Natural killer cell (primary cell): ENCODE measurements at regions of chr1 and their contacts with region 1.

Region 1: DNA sequence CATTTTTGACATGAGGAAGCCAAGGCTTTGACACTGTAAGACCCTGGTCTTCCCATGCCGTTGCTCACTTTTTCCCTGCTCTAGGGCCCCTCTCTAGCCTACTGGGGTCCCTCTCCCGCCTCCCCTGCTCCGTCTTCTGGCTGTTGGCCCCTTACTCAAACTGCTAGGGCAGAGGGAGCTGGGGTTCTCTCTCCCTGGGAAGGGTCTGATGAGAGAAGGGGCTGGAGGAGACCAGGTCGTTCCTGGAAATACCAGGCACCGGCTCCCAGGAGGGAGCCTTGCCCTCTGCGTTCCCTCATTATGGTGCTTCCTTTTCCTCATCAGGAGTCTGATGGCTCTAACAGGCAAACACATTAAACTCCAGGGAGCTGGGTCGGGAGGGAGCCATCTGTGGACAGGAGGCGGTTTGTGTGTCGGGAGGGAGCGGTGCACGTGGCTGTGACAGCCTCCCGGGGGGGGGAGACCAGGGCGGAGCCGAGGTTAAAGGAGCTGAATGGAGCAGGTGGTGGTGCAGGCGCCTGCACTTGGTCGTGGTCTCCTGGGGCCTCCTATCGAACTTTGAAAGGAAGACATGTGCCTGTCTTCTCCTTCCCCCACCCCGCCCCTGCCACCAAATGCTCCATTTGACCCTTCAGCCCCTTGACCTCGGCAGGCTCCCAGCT is 35.4 kb upstream of the LHX4 start:
- DNase-seq: no peak
- ATAC-seq: no peak
- H3K4me3 ChIP-seq: no peak overlapping the region
- H3K4me3 Mint-ChIP-seq: no peak overlapping the region
- H3K27ac ChIP-seq: no peak overlapping the region
- H3K27ac Mint-ChIP-seq: peak overlapping the region in 1 of 2 donors; percentile 31
- H3K4me1 ChIP-seq: peaks cover 51% of the 10 kb centered on the region
- H3K4me1 Mint-ChIP-seq: peaks cover 43 to 52% of the 10 kb centered on the region in 2 donors
- H3K27me3 ChIP-seq: no peaks in the 10 kb centered on the region
- H3K27me3 Mint-ChIP-seq: peaks cover 0 to 3% of the 10 kb centered on the region in 2 donors
- CTCF ChIP-seq: no peak

Region 2: GRCh38 chr1:179954493-179955297 is 240.0 kb before region 1 on chr1 and contains the start of gene CEP350:
- intact Hi-C with region 1: loop called (anchors 5 kb)
- DNase-seq: peak; percentile 95 to 100
- ATAC-seq: peak; percentile 87 to 97 (median 90)
- H3K4me3 ChIP-seq: peak within 1 kb of the TSS; percentile 69
- H3K4me3 Mint-ChIP-seq: peak within 1 kb of the TSS; percentile 93
- H3K27ac ChIP-seq: peak within 1 kb of the TSS; percentile 80
- H3K27ac Mint-ChIP-seq: peak within 1 kb of the TSS; percentile 95 to 96
- H3K4me1 ChIP-seq: peaks cover 18% of the 10 kb centered on the region
- H3K4me1 Mint-ChIP-seq: peaks cover 52 to 53% of the 10 kb centered on the region in 2 donors
- H3K27me3 ChIP-seq: no peaks in the 10 kb centered on the region
- H3K27me3 Mint-ChIP-seq: no peaks in the 10 kb centered on the region
- CTCF ChIP-seq: no peak
- total RNA-seq, gene CEP350: 66.9 to 83.7 (median 75.3) TPM